ENCODE measurements at regions of chr10 and their contacts with region 1.

Region 1: GRCh38 chr10:14200698-14201544 is 129.8 kb downstream of the FRMD4A start:
- DNase-seq: peak; percentile 8
- H3K4me3 ChIP-seq: no peak overlapping the region
- H3K27ac ChIP-seq: no peak overlapping the region
- H3K4me1 ChIP-seq: no peaks in the 10 kb centered on the region
- H3K27me3 ChIP-seq: peaks cover 32% of the 10 kb centered on the region
- CTCF ChIP-seq: peak in 1 of 5 experiments; percentile 11
- EP300 ChIP-seq: no peak
- POLR2A ChIP-seq: no peak

Region 2: GRCh38 chr10:13882112-13882711 is 318.7 kb before region 1 on chr10:
- in situ Hi-C with region 1: no loop called
- intact Hi-C with region 1: no loop called
- DNase-seq: no peak
- H3K4me3 ChIP-seq: no peak overlapping the region
- H3K27ac ChIP-seq: peak overlapping the region; percentile 8 to 55 (median 26)
- H3K4me1 ChIP-seq: peaks cover 0 to 10% (median 1%) of the 10 kb centered on the region in 4 donors
- H3K27me3 ChIP-seq: no peaks in the 10 kb centered on the region
- CTCF ChIP-seq: no peak
- EP300 ChIP-seq: no peak
- POLR2A ChIP-seq: no peak

Region 3: GRCh38 chr10:14423111-14423744 is 222.3 kb after region 1 on chr10:
- in situ Hi-C with region 1: no loop called
- intact Hi-C with region 1: loop called (anchors 5 kb)
- DNase-seq: peak; percentile 8
- H3K4me3 ChIP-seq: no peak overlapping the region
- H3K27ac ChIP-seq: no peak overlapping the region
- H3K4me1 ChIP-seq: no peaks in the 10 kb centered on the region
- H3K27me3 ChIP-seq: peaks cover 9% of the 10 kb centered on the region
- CTCF ChIP-seq: no peak
- EP300 ChIP-seq: no peak
- POLR2A ChIP-seq: no peak

Region 4: DNA sequence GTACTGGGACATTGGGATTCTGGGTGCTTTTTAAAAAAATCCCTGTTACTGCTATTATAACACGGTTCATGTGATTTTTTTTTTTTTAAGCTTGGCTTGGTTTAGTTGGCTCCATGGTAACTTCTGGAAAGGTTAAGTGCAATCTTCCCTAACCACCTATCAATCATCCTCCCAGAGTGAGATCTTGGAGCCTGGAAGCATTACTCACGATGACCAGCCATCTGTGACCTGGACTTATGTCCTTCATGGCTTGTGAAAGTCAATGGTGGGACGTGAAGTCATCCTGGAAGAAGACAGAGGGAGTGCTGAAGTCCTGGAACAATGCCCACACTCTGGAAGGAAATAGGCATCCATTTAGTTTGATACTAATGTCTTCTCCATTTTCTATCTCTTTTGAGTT is 265.3 kb after region 1 on chr10:
- in situ Hi-C with region 1: loop called in 2 of 4 experiments (anchors 10 to 25 kb)
- intact Hi-C with region 1: no loop called
- DNase-seq: no peak
- H3K4me3 ChIP-seq: no peak overlapping the region
- H3K27ac ChIP-seq: no peak overlapping the region
- H3K4me1 ChIP-seq: no peaks in the 10 kb centered on the region
- H3K27me3 ChIP-seq: no peaks in the 10 kb centered on the region
- CTCF ChIP-seq: no peak
- EP300 ChIP-seq: no peak
- POLR2A ChIP-seq: no peak

Region 5: GRCh38 chr10:14478604-14479003 is 277.7 kb after region 1 on chr10:
- in situ Hi-C with region 1: loop called in 1 of 4 experiments (anchors 25 kb)
- intact Hi-C with region 1: loop called (anchors 2 kb)
- DNase-seq: no peak
- H3K4me3 ChIP-seq: no peak overlapping the region
- H3K27ac ChIP-seq: no peak overlapping the region
- H3K4me1 ChIP-seq: no peaks in the 10 kb centered on the region
- H3K27me3 ChIP-seq: peaks cover 5% of the 10 kb centered on the region
- CTCF ChIP-seq: peak in 3 of 5 experiments; percentile 40 to 44 (median 41)
- EP300 ChIP-seq: no peak
- POLR2A ChIP-seq: no peak

Measured in transverse colon (tissue), 4 donors.